Heart right ventricle (tissue), 16 donors: ENCODE measurements at regions of chr2 and their contacts with region 1.

Region 1: GRCh38 chr2:231394211-231395141 is 1.0 kb upstream of the B3GNT7 start:
- DNase-seq: no peak
- ATAC-seq: no peak
- H3K4me3 ChIP-seq: peak overlapping the region in 1 of 10 donors; percentile 42
- H3K27ac ChIP-seq: peak overlapping the region in 1 of 10 donors; percentile 70
- H3K4me1 ChIP-seq: peaks cover 0 to 35% (median 8%) of the 10 kb centered on the region in 9 donors
- H3K27me3 ChIP-seq: peaks cover 0 to 31% (median 20%) of the 10 kb centered on the region in 7 donors
- CTCF ChIP-seq: peak in 6 of 9 donors; percentile 9 to 20 (median 15)

Region 2: DNA sequence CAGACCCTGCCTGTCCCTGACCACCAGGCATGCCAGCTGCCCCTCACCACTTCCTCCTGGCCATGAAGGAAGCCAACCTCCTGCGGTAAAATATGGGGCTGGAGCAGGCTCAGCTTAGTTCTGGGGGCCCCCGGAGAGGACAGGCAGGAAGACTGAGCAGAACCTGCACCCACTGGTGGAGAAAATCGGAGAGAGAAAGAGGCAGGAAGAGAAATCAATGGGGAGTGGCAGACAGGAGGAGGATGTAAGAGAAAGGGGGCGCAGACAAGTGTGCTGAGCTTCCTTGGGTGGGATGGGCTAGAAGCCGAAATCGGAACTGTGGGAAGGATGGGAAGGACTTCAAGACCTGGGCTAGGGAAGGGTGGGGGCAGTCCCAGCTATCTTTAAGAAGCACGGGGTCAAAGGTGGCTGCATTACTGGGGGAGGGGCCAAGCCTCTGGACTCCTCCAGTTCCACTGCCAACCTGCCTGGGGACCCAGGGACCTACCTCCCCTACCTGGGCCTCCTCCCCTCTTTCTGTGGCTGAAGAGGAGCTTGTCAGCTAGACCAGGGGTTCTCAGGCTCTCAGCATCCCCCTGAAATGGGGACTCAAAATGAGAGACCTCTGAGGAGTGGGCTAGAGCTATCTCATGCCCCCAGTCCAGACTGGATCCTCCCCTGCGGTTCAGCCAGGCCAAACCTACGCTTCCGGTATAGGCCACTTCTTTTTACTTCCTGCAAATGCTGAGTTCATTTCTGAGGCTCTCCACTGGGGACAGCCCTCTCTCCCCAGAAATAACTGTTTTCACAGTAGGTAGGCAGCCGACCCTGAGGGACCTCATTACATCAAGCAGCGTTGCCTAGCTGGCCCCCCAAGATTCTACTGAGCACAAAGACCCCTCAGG is 32.6 kb before region 1 on chr2:
- intact Hi-C with region 1: no loop called
- DNase-seq: no peak
- ATAC-seq: peak in 3 of 8 donors; percentile 30 to 43 (median 40)
- H3K4me3 ChIP-seq: no peak overlapping the region
- H3K27ac ChIP-seq: peak overlapping the region in 2 of 10 donors; percentile 26 to 81
- H3K4me1 ChIP-seq: peaks cover 0 to 39% (median 5%) of the 10 kb centered on the region in 9 donors
- H3K27me3 ChIP-seq: no peaks in the 10 kb centered on the region
- CTCF ChIP-seq: peak in 1 of 9 donors; percentile 11

Region 3: GRCh38 chr2:231374771-231375170 is 19.7 kb before region 1 on chr2:
- intact Hi-C with region 1: loop called in 1 of 10 experiments (anchors 1 kb)
- DNase-seq: no peak
- ATAC-seq: no peak
- H3K4me3 ChIP-seq: no peak overlapping the region
- H3K27ac ChIP-seq: no peak overlapping the region
- H3K4me1 ChIP-seq: peaks cover 0 to 8% (median 5%) of the 10 kb centered on the region in 9 donors
- H3K27me3 ChIP-seq: no peaks in the 10 kb centered on the region
- CTCF ChIP-seq: no peak

Region 4: GRCh38 chr2:231780909-231781797 is 386.7 kb after region 1 on chr2 and contains the start of gene PDE6D:
- intact Hi-C with region 1: no loop called
- DNase-seq: peak; percentile 99 to 100
- ATAC-seq: peak; percentile 95 to 98 (median 96)
- H3K4me3 ChIP-seq: peak within 1 kb of the TSS; percentile 77 to 98 (median 90)
- H3K27ac ChIP-seq: peak within 1 kb of the TSS; percentile 43 to 95 (median 88)
- H3K4me1 ChIP-seq: peaks cover 2 to 49% (median 43%) of the 10 kb centered on the region in 9 donors
- H3K27me3 ChIP-seq: no peaks in the 10 kb centered on the region
- CTCF ChIP-seq: no peak
- total RNA-seq, gene PDE6D: 11.4 to 23.3 (median 18.4) TPM

Region 5: DNA sequence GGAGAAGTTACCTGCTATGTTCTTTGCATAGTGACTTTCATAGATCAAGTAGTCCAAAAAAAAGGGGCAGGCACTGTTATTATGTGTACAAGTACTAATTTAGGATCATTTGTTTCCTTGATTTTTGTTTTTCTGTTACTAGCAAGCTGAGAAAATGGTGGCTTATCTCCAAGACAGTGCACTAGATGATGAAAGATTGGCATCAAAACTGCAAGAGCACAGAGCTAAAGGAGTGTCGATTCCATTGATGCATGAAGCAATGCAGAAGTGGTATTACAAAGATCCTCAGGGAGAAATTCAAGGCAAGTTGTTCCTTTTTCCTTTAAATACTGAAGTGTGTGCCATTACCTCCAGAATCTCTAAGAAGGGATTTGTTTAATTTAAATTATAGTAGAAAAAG is 1401.4 kb after region 1 on chr2:
- intact Hi-C with region 1: no loop called
- DNase-seq: no peak
- ATAC-seq: no peak
- H3K4me3 ChIP-seq: no peak overlapping the region
- H3K27ac ChIP-seq: no peak overlapping the region
- H3K4me1 ChIP-seq: no peaks in the 10 kb centered on the region
- H3K27me3 ChIP-seq: no peaks in the 10 kb centered on the region
- CTCF ChIP-seq: no peak